Ascending aorta (tissue), 2 donors: ENCODE measurements at regions of chr3 and their contacts with region 1.

Region 1: DNA sequence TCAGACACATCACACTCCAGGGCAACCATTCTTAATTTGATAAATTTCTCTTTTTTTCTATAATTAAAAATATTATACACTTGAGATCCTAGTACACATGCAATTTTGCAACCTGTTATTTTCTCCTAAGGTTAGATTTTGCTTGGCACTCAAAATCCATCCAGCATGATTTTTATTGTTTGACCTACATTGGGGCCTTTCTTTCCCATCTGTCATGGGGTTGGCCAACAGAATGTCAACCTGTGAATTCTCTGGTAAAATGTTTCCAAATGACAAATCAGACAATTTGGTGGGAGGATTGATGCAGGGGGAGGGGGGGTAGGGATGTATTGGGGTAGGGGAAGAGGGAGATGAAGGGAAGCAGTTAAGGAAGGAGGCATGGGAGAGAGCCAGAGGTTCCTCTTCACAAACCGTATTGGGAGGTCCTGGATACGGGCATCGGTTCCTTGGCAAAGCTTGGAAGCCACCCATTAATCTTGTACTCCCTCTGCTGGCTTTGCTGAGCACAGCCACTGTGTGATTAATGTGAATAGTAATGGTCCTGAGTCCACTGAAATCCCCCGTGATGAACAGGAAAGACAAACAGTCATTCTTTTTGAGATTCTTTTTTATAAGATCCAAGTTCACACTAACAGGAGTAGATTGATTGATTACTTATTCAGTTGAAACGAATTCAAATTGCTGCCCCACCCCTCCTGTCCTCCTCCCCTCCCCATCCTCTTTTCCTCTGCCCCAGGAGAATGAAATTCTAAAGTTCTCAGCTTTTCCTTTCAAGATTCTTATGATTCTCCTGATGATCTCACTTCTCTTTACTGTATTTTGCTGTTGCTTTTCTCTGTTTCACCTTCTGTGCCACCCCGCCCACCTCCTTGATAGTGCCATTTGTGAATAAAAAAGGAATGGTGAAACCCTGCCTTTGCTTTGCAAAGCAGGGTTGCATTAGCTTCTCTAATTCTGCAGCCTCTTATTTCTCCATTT is 82.2 kb upstream of the SLC25A26 start:
- DNase-seq: peak in 1 of 2 donors; percentile 78
- H3K4me3 ChIP-seq: no peak overlapping the region
- H3K27ac ChIP-seq: no peak overlapping the region
- H3K4me1 ChIP-seq: no peaks in the 10 kb centered on the region
- H3K27me3 ChIP-seq: no peaks in the 10 kb centered on the region
- CTCF ChIP-seq: peak; percentile 70 to 87 (median 72)

Region 2: DNA sequence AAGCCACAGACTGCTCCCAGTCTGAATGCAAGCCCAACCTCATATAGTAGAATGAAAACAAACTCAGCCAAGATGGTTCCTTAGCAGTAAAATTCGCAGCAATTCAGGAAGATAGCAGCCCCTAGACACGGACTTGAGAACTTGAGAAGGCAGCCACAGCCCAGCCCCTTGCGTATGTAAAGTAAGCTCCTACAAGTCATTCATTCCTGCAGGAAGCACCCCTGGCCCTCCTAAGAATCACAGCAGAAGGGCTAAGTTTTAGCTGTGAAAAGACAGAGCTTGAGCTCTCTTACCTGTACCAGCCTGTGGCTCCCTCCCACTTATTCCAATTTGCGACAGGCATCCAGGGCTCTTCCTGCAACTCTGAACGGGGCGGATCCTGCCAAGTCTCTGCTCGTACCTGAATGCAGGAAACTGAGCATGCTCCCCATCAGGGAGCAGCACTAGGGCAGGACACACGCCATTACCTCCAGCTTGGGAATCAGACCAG is 236.3 kb before region 1 on chr3:
- intact Hi-C with region 1: loop called (anchors 10 kb)
- DNase-seq: no peak
- H3K4me3 ChIP-seq: peak overlapping the region; percentile 10 to 36
- H3K27ac ChIP-seq: no peak overlapping the region
- H3K4me1 ChIP-seq: peaks cover 0 to 7% of the 10 kb centered on the region in 2 donors
- H3K27me3 ChIP-seq: no peaks in the 10 kb centered on the region
- CTCF ChIP-seq: no peak

Region 3: DNA sequence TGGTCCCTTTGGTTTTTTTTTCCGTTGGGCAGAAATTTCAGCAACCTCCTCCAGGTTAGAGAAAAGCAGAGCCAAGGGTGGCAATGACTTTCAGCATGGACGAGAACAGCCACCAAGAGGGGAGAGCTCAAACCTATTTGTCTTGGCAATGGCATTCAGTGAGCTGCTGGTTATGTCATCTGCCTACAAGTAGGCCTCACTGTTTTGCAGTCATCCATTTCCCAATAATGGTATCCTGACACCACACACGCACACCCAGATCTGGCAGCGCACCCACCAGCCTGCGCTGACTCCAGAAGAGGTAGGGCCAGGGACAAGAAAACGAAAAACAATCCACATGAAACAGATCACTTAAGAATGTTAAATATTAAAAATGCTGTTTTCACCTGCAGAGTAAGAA is 192.2 kb before region 1 on chr3:
- intact Hi-C with region 1: loop called (anchors 10 kb)
- DNase-seq: peak; percentile 16 to 78
- H3K4me3 ChIP-seq: no peak overlapping the region
- H3K27ac ChIP-seq: peak overlapping the region; percentile 53 to 71
- H3K4me1 ChIP-seq: peaks cover 0 to 32% of the 10 kb centered on the region in 2 donors
- H3K27me3 ChIP-seq: no peaks in the 10 kb centered on the region
- CTCF ChIP-seq: no peak

Region 4: GRCh38 chr3:66076861-66077470 is 61.7 kb before region 1 on chr3:
- intact Hi-C with region 1: no loop called
- DNase-seq: no peak
- H3K4me3 ChIP-seq: no peak overlapping the region
- H3K27ac ChIP-seq: no peak overlapping the region
- H3K4me1 ChIP-seq: no peaks in the 10 kb centered on the region
- H3K27me3 ChIP-seq: no peaks in the 10 kb centered on the region
- CTCF ChIP-seq: no peak

Region 5: DNA sequence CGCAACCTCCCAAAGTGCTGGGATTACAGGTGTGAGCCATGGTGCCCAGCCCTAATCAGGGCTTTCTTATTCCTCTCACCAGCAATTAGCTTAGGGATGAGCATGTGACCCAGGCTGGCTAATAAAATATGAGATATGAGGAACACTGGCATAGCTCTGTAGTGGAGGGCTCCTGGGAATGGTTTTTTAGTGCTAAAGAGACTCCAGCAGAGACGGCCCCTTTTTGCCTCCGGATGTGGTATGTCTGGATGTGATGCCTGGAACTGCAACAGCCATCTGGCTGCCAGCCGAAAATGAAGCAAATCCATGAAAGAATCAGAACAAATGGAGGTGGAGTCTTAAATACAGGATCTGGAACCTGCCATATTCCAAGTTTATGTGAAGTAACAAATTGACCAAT is 30.8 kb before region 1 on chr3:
- intact Hi-C with region 1: no loop called
- DNase-seq: no peak
- H3K4me3 ChIP-seq: no peak overlapping the region
- H3K27ac ChIP-seq: no peak overlapping the region
- H3K4me1 ChIP-seq: peaks cover 0 to 2% of the 10 kb centered on the region in 2 donors
- H3K27me3 ChIP-seq: no peaks in the 10 kb centered on the region
- CTCF ChIP-seq: no peak

Region 6: DNA sequence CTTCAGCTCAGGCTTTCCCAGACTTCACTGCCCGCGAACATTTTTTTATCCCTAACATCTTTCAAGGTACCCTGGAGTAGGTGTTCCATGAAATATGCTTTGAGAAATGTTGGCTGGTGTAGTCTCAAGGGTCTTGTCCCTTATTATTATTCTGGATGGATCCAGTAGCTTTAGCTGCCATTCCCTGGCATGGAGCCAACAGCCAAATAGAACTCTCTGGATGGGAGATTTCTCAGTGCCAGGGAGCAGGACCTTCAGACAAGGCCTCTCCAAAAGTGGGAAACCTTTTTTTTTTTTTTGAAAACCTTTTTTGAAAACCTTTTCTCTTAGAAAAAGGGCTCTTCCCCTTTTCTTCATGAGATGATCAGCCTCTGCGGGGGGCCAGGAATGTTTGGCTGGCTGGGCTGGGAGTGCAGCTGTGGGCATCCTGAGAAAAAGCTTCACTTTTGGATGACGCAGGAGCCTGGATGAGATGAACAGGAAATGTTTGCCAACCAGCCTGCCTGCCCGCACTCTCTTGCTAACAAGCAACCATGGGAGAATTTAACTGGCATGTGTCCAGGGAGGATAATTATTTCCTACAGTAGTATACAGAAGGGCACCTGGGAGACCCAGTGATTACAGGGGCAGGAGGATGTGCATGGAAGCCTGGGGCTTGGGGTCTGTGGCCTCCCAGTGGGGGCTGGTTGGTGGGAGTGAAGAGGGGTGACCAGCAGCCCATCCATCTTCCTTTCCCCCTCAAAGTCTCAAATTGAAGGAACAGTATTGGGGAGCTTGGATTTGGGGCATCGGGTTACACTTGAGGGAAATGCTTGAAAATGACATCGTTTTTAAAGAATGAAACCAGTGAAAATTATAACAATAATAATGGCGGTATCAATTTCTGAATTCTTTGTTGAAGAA is 471.3 kb after region 1 on chr3:
- intact Hi-C with region 1: no loop called
- DNase-seq: no peak
- H3K4me3 ChIP-seq: no peak overlapping the region
- H3K27ac ChIP-seq: no peak overlapping the region
- H3K4me1 ChIP-seq: no peaks in the 10 kb centered on the region
- H3K27me3 ChIP-seq: no peaks in the 10 kb centered on the region
- CTCF ChIP-seq: no peak